Activated CD4-positive, alpha-beta T cell treated with anti-CD3 and anti-CD28 coated beads for 36 hours (primary cell): ENCODE measurements at regions of chr11 and their contacts with region 1.

Region 1: GRCh38 chr11:6481012-6481923 is at the starts of genes ARFIP2 and TIMM10B:
- DNase-seq: peak; percentile 99
- ATAC-seq: peak; percentile 98
- H3K4me3 Mint-ChIP-seq: peak within 1 kb of the TSS; percentile 80
- H3K27ac Mint-ChIP-seq: peak within 1 kb of the TSS; percentile 92
- H3K4me1 Mint-ChIP-seq: peaks cover 30% of the 10 kb centered on the region
- H3K27me3 Mint-ChIP-seq: no peaks in the 10 kb centered on the region
- total RNA-seq, gene ARFIP2: 36.7 to 40.3 TPM
- total RNA-seq, gene TIMM10B: 27.1 to 39.2 TPM

Region 2: DNA sequence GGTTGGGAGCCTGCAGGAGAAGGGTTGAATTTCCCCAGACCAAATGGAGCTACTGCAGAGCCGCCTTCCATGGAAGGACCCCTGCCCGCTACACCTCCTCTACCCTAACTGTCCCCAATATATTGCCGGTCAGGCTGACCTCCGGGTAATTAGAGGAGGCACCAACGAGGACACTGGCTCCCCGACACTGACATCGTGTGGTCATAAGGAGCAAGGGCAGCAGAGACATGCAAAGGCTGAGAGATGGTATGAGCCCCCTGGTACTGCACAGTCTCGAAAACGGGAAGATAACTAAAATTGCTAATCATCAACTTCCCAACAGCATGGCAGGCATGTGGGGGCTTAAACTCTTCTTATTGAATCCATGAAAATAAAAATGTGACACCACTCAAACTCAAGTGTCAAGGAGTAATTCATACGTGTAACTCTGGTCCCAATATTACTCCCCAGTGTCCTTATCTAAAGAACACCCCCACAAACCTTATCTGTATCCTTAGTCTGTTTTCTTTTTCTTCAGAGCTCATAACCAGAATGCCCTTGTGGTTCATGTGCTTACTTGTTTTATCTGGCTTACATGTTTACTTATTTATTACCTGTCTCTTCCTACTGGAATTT is 165.3 kb before region 1 on chr11:
- CTCF ChIA-PET with region 1: no interaction called
- POLR2A ChIA-PET with region 1: no interaction called
- intact Hi-C with region 1: loop called in 1 of 2 experiments (anchors 2 kb)
- DNase-seq: peak; percentile 59
- ATAC-seq: peak; percentile 33
- H3K4me3 Mint-ChIP-seq: no peak overlapping the region
- H3K27ac Mint-ChIP-seq: no peak overlapping the region
- H3K4me1 Mint-ChIP-seq: peaks cover 12% of the 10 kb centered on the region
- H3K27me3 Mint-ChIP-seq: peaks cover 42% of the 10 kb centered on the region

Region 3: DNA sequence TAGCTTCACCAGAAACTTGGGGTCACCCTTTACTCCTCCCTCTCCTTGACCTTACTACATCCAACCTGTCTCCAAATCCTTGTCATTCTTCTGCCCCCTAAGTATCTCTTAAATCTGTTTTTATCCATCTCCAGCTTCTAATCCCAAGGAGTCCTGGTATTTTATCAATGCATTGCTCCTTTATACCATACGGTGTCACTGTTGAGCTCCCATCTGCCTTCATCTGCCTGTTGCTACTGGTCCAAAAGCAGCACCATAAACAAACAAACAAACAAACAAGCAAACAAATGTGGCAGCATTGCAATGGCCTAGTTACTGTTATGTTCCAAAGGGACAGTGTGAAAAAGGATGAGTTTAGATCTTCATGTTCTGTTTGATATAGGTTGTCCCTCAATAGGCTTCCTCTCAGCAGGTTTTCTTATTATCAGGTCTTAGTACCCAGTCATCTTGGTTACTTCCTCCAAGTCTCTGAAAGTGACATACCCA is 50.0 kb after region 1 on chr11:
- CTCF ChIA-PET with region 1: interaction called, 4 read pairs
- POLR2A ChIA-PET with region 1: interaction called, 3 read pairs
- intact Hi-C with region 1: loop called (anchors 2 to 5 kb)
- DNase-seq: peak; percentile 26
- ATAC-seq: peak; percentile 71
- H3K4me3 Mint-ChIP-seq: no peak overlapping the region
- H3K27ac Mint-ChIP-seq: no peak overlapping the region
- H3K4me1 Mint-ChIP-seq: peaks cover 11% of the 10 kb centered on the region
- H3K27me3 Mint-ChIP-seq: no peaks in the 10 kb centered on the region

Region 4: GRCh38 chr11:6619004-6619745 is 137.9 kb after region 1 on chr11 and contains the start of gene TPP1:
- CTCF ChIA-PET with region 1: interaction called, 5 read pairs
- POLR2A ChIA-PET with region 1: no interaction called
- intact Hi-C with region 1: loop called in 1 of 2 experiments (anchors 1 kb)
- DNase-seq: peak; percentile 91
- ATAC-seq: peak; percentile 93
- H3K4me3 Mint-ChIP-seq: no peak within 1 kb of the TSS
- H3K27ac Mint-ChIP-seq: no peak within 1 kb of the TSS
- H3K4me1 Mint-ChIP-seq: peaks cover 8% of the 10 kb centered on the region
- H3K27me3 Mint-ChIP-seq: no peaks in the 10 kb centered on the region
- total RNA-seq, gene TPP1: 38.1 to 47.9 TPM